ENCODE measurements at regions of chr19 and their contacts with region 1.

Region 1: GRCh38 chr19:2475702-2476450 is at the start of gene GADD45B:
- DNase-seq: peak; percentile 98
- H3K4me3 Mint-ChIP-seq: peak within 1 kb of the TSS; percentile 93
- H3K27ac Mint-ChIP-seq: peak within 1 kb of the TSS; percentile 91
- H3K4me1 Mint-ChIP-seq: peaks cover 18% of the 10 kb centered on the region
- H3K27me3 Mint-ChIP-seq: peaks cover 3% of the 10 kb centered on the region
- total RNA-seq, gene GADD45B: 34.5 to 38.1 TPM

Region 2: GRCh38 chr19:2427429-2428320 is 48.2 kb before region 1 on chr19 and contains the start of gene TIMM13:
- CTCF ChIA-PET with region 1: interaction called, 3 read pairs
- POLR2A ChIA-PET with region 1: interaction called, 13 read pairs
- intact Hi-C with region 1: no loop called
- DNase-seq: peak; percentile 97
- H3K4me3 Mint-ChIP-seq: peak within 1 kb of the TSS; percentile 90
- H3K27ac Mint-ChIP-seq: peak within 1 kb of the TSS; percentile 97
- H3K4me1 Mint-ChIP-seq: peaks cover 15% of the 10 kb centered on the region
- H3K27me3 Mint-ChIP-seq: no peaks in the 10 kb centered on the region
- total RNA-seq, gene TIMM13: 69.0 to 72.0 TPM

Region 3: GRCh38 chr19:2494444-2495129 is 18.7 kb after region 1 on chr19:
- CTCF ChIA-PET with region 1: interaction called, 3 read pairs
- POLR2A ChIA-PET with region 1: interaction called, 21 read pairs
- intact Hi-C with region 1: no loop called
- DNase-seq: peak; percentile 63
- H3K4me3 Mint-ChIP-seq: peak overlapping the region; percentile 59
- H3K27ac Mint-ChIP-seq: no peak overlapping the region
- H3K4me1 Mint-ChIP-seq: peaks cover 21% of the 10 kb centered on the region
- H3K27me3 Mint-ChIP-seq: peaks cover 26% of the 10 kb centered on the region

Region 4: GRCh38 chr19:2524838-2525723 is 49.2 kb after region 1 on chr19:
- CTCF ChIA-PET with region 1: no interaction called
- POLR2A ChIA-PET with region 1: no interaction called
- intact Hi-C with region 1: no loop called
- DNase-seq: no peak
- H3K4me3 Mint-ChIP-seq: no peak overlapping the region
- H3K27ac Mint-ChIP-seq: no peak overlapping the region
- H3K4me1 Mint-ChIP-seq: no peaks in the 10 kb centered on the region
- H3K27me3 Mint-ChIP-seq: no peaks in the 10 kb centered on the region

Region 5: DNA sequence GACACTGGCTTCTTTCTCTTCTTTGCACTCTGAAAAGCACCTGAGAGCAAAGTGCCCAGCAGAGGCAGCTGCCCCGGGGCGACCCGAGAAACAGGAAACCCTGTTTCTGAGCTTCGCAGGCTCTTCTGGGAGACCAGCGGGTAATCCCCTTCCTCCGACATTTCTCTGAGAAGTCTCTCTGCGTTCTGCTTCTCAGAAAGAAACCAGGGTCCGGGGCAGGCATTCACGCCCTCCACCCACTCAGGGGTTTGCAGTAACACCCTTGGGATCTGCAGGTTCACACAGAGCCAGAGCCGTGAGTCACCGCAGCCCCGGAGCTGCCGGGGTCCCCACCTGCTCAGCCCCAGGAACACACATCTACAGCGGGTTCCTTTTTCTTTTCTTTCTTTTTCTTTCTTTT is 86.0 kb after region 1 on chr19:
- CTCF ChIA-PET with region 1: interaction called, 3 read pairs
- POLR2A ChIA-PET with region 1: interaction called, 19 read pairs
- intact Hi-C with region 1: loop called (anchors 1 kb)
- DNase-seq: peak; percentile 86
- H3K4me3 Mint-ChIP-seq: peak overlapping the region; percentile 71
- H3K27ac Mint-ChIP-seq: peak overlapping the region; percentile 76
- H3K4me1 Mint-ChIP-seq: peaks cover 25% of the 10 kb centered on the region
- H3K27me3 Mint-ChIP-seq: peaks cover 2% of the 10 kb centered on the region

Region 6: GRCh38 chr19:2610637-2611482 is 135.0 kb after region 1 on chr19:
- CTCF ChIA-PET with region 1: interaction called, 174 read pairs
- POLR2A ChIA-PET with region 1: interaction called, 123 read pairs
- intact Hi-C with region 1: loop called (anchors 1 kb)
- DNase-seq: peak; percentile 92
- H3K4me3 Mint-ChIP-seq: peak overlapping the region; percentile 78
- H3K27ac Mint-ChIP-seq: no peak overlapping the region
- H3K4me1 Mint-ChIP-seq: peaks cover 41% of the 10 kb centered on the region
- H3K27me3 Mint-ChIP-seq: peaks cover 17% of the 10 kb centered on the region

Region 7: GRCh38 chr19:2636897-2637683 is 161.2 kb after region 1 on chr19:
- CTCF ChIA-PET with region 1: interaction called, 45 read pairs
- POLR2A ChIA-PET with region 1: interaction called, 8 read pairs
- intact Hi-C with region 1: loop called (anchors 1 kb)
- DNase-seq: peak; percentile 82
- H3K4me3 Mint-ChIP-seq: no peak overlapping the region
- H3K27ac Mint-ChIP-seq: no peak overlapping the region
- H3K4me1 Mint-ChIP-seq: peaks cover 5% of the 10 kb centered on the region
- H3K27me3 Mint-ChIP-seq: no peaks in the 10 kb centered on the region

Measured in activated CD4-positive, alpha-beta memory T cell treated with anti-CD3 and anti-CD28 coated beads for 36 hours (primary cell).